Activated CD4-positive, alpha-beta T cell treated with anti-CD3 and anti-CD28 coated beads for 36 hours (primary cell): ENCODE measurements at regions of chr5 and their contacts with region 1.

Region 1: DNA sequence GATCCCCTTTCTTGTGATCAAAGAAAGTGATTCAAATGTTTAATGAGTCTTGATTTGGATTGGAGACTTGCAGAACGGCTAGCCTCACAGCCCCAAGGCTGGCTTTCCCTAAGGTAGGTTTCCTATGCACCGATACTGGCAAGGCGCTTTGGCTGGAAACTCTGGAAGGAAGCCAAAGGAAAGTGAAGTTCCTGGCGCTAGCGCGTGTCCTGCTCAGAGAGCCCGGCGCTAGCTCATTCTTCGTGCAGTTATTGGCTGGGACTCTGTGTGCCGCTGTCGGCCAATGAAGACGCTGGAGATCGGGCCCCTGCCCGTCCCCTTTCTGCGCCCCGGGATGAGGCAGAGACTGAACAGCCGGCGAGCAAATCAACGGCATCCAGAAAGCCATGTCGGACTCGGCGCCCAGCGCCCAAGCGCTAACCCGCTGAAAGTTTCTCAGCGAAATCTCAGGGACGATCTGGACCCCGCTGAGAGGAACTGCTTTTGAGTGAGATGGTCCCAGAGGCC is at the start of gene PCDHGC3:
- DNase-seq: peak; percentile 79
- ATAC-seq: peak; percentile 97
- H3K4me3 Mint-ChIP-seq: peak within 1 kb of the TSS; percentile 82
- H3K27ac Mint-ChIP-seq: peak within 1 kb of the TSS; percentile 37
- H3K4me1 Mint-ChIP-seq: peaks cover 28% of the 10 kb centered on the region
- H3K27me3 Mint-ChIP-seq: peaks cover 47% of the 10 kb centered on the region
- total RNA-seq, gene PCDHGC3: 0.16 to 0.34 TPM

Region 2: GRCh38 chr5:141430332-141431113 is 45.2 kb before region 1 on chr5 and contains the start of gene PCDHGA12:
- CTCF ChIA-PET with region 1: interaction called, 7 read pairs
- POLR2A ChIA-PET with region 1: no interaction called
- intact Hi-C with region 1: loop called in 1 of 2 experiments (anchors 5 kb)
- DNase-seq: peak; percentile 68
- ATAC-seq: peak; percentile 73
- H3K4me3 Mint-ChIP-seq: peak within 1 kb of the TSS; percentile 45
- H3K27ac Mint-ChIP-seq: no peak within 1 kb of the TSS
- H3K4me1 Mint-ChIP-seq: peaks cover 17% of the 10 kb centered on the region
- H3K27me3 Mint-ChIP-seq: peaks cover 69% of the 10 kb centered on the region
- total RNA-seq, gene PCDHGA12: 0.07 to 0.09 TPM

Region 3: DNA sequence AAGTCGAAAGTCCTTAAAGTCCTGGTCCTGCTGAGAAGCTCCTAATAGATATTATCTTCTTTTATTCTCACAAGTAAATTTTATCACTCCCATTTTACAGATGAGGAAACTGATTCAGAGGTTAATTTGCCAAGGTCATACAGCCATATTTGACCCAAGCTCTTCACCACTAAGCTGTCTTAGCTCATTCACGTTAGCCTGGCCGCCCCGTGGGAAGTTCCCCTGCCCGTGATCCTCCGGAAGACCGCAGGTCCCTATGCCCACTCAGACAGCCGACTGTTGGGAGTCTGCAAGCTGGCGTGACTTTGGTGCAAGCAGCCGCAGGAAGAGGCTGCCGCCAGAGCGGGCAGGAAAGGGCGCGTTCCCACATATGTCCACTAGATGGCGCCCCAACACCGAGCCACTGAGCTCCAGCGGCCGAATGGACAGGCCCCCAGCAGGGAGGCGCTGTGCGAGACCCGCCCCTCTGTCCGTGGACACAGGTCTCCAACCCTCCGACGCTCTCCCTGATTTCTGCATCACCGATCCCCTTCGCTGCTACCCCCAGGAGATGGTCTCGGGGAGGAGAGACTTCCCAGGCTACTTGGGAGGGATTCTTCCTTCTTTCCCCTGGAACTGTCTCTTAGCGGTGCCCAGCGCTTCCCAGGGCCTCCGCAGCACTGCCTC is 216.3 kb after region 1 on chr5:
- CTCF ChIA-PET with region 1: no interaction called
- POLR2A ChIA-PET with region 1: no interaction called
- intact Hi-C with region 1: no loop called
- DNase-seq: peak; percentile 93
- ATAC-seq: peak; percentile 71
- H3K4me3 Mint-ChIP-seq: peak overlapping the region; percentile 64
- H3K27ac Mint-ChIP-seq: peak overlapping the region; percentile 55
- H3K4me1 Mint-ChIP-seq: peaks cover 25% of the 10 kb centered on the region
- H3K27me3 Mint-ChIP-seq: peaks cover 4% of the 10 kb centered on the region

Region 4: GRCh38 chr5:141835928-141836670 is 360.4 kb after region 1 on chr5:
- CTCF ChIA-PET with region 1: no interaction called
- POLR2A ChIA-PET with region 1: no interaction called
- intact Hi-C with region 1: no loop called
- DNase-seq: no peak
- ATAC-seq: peak; percentile 47
- H3K4me3 Mint-ChIP-seq: no peak overlapping the region
- H3K27ac Mint-ChIP-seq: no peak overlapping the region
- H3K4me1 Mint-ChIP-seq: peaks cover 14% of the 10 kb centered on the region
- H3K27me3 Mint-ChIP-seq: no peaks in the 10 kb centered on the region